ENCODE measurements at regions of chr14 and their contacts with region 1.

Region 1: GRCh38 chr14:36700656-36701055 is 39.0 kb downstream of the PAX9 start:
- DNase-seq: no peak
- CTCF ChIP-seq: no peak

Region 2: GRCh38 chr14:36690301-36691033 is 10.2 kb before region 1 on chr14:
- CTCF ChIA-PET with region 1: interaction called, 10 read pairs
- POLR2A ChIA-PET with region 1: no interaction called
- DNase-seq: no peak
- CTCF ChIP-seq: no peak

Measured in GM10248 (cell line).